Testis (tissue), 5 donors: ENCODE measurements at regions of chr7 and their contacts with region 1.

Region 1: DNA sequence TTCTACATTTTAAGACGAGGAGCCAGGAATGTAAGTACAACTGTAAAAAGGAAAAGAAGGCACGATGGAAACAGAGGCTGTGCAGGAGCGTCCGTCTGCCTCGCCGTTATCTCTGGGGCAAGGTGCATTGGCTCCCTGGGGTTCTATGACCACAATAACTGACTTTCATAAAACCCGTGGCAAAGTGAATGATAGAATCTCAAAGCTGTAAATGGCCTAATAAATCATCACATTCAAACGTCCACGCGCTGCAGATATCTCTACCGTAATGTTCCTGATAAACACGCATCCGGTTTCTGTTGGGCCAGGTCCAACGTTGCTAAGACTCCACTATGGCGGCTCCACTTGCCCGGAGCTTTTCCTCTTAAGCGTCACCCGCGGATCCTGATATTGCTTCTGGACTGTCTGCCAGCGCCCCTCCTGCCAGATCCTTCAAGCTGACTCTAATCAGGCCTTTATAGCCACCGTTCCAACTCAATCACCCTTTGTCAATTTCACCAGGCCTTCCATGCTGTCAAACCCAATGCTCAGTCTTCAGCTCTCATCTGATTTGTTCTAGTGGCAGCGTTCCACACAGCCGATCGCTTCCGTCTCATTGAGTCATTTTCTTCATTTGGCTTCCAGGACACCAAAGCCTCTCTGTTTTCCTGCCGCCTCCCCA is 265.6 kb upstream of the FOXK1 start:
- DNase-seq: peak; percentile 69
- H3K4me3 ChIP-seq: peak overlapping the region; percentile 34 to 40
- H3K27ac ChIP-seq: no peak overlapping the region
- H3K4me1 ChIP-seq: no peaks in the 10 kb centered on the region
- H3K27me3 ChIP-seq: no peaks in the 10 kb centered on the region
- CTCF ChIP-seq: no peak
- POLR2A ChIP-seq: no peak

Region 2: GRCh38 chr7:4566714-4567113 is 150.2 kb after region 1 on chr7:
- intact Hi-C with region 1: loop called (anchors 5 kb)
- DNase-seq: no peak
- H3K4me3 ChIP-seq: no peak overlapping the region
- H3K27ac ChIP-seq: no peak overlapping the region
- H3K4me1 ChIP-seq: no peaks in the 10 kb centered on the region
- H3K27me3 ChIP-seq: no peaks in the 10 kb centered on the region
- CTCF ChIP-seq: no peak
- POLR2A ChIP-seq: no peak